ENCODE measurements at regions of chr1 and their contacts with region 1.

Region 1: DNA sequence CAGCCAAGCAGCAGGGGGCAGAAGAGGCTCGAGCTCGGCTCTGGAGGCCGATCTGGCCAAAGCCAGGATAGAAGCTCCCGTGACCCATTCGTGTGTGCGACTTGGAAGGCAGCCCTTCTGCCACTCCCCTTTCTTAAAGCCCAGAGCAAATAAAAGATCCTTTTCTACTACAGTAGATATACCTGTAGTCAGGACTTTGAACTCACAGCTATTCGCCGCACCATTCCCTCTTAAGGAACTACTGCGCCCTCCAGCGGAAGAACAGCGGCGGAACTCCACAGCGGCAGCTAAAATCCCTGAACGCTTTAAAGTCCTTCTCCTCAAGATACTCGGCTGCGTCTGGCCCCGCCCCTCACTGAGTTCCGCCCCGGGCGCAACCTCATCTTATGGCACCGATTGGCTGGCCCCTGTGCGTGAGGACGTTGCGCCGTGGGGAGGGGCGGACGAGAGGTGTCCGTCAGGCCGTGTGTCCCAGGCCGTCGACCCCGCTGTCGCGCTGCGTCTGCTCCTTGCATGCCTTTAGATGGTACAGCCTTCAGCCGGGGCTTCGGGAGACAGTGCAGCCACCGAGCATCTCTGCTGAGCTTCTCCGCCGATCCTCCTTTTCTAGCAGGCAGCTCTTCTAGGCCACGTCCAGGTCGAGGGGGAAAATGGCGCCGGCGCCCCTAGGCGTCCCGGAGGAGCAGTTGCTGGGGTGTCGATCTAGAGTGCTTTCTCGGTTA is at the start of gene LRIG2:
- DNase-seq: peak; percentile 96 to 98 (median 96)
- H3K4me3 ChIP-seq: peak within 1 kb of the TSS; percentile 84 to 96 (median 85)
- H3K4me3 Mint-ChIP-seq: peak within 1 kb of the TSS; percentile 94 to 98
- H3K27ac ChIP-seq: peak within 1 kb of the TSS; percentile 86 to 95
- H3K27ac Mint-ChIP-seq: peak within 1 kb of the TSS; percentile 95 to 98 (median 97)
- H3K4me1 ChIP-seq: peaks cover 15 to 20% of the 10 kb centered on the region in 2 donors
- H3K4me1 Mint-ChIP-seq: peaks cover 30% of the 10 kb centered on the region
- H3K27me3 ChIP-seq: no peaks in the 10 kb centered on the region
- H3K27me3 Mint-ChIP-seq: no peaks in the 10 kb centered on the region
- CTCF ChIP-seq: peak; percentile 99
- polyA plus RNA-seq, gene LRIG2: 0.93 to 12.7 (median 0.96) TPM

Region 2: GRCh38 chr1:112809253-112809684 is 263.6 kb before region 1 on chr1:
- intact Hi-C with region 1: loop called in 1 of 2 experiments (anchors 5 kb)
- DNase-seq: peak; percentile 36 to 56 (median 44)
- H3K4me3 ChIP-seq: no peak overlapping the region
- H3K4me3 Mint-ChIP-seq: no peak overlapping the region
- H3K27ac ChIP-seq: no peak overlapping the region
- H3K27ac Mint-ChIP-seq: no peak overlapping the region
- H3K4me1 ChIP-seq: no peaks in the 10 kb centered on the region
- H3K4me1 Mint-ChIP-seq: peaks cover 2% of the 10 kb centered on the region
- H3K27me3 ChIP-seq: no peaks in the 10 kb centered on the region
- H3K27me3 Mint-ChIP-seq: peaks cover 6 to 15% (median 7%) of the 10 kb centered on the region in 3 donors
- CTCF ChIP-seq: peak; percentile 93

Measured in CD14-positive monocyte (primary cell).